ENCODE measurements at regions of chr17 and their contacts with region 1.

Region 1: DNA sequence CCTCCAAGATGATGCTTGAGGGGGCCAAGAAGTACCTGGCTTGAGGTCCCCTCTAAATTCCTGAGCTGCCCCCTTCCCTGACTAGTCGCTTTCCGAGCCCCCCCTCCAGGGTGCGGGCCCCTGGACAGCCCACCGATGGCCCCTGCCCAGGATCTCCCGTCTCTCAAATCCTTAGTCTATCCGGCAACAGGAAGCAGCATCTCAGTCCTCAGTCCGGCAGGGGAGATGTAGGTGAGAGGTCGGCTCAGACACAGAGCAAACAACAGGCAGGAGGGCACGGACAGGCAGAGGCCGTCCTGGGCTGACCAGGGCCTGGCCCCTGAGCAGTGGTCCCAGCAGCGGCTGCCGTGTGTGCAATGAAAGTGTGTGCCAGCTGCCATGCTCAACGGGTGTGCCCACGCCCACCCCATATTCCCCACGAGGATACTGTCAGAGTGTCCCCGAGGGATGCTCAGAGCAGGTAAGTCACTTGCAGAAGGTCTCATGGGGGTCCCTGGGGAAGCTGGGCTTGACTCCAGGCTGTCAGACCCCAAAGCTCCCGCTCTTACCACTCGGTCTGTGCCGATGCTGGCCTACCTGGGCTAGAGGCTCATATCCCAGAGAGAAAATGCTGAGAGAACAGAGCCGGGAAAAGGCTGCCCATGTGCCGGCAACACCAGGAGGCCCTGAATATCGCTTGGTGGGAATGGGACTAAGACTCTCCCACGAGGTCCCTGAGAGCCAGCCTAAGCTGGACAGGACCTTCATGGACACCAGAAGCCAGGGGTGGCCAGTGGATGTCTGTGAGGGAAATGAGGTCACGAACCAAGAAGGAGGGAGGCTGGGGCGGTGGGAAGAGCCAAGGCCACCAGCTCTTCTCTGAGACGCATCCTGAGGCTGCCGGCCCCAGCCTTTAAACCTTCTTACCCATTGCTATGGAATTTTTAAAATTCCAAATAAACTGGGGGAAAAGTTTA is 7.1 kb downstream of the SLC43A2 start:
- DNase-seq: no peak
- H3K4me3 ChIP-seq: no peak overlapping the region
- H3K27ac ChIP-seq: no peak overlapping the region
- H3K4me1 ChIP-seq: no peaks in the 10 kb centered on the region
- H3K27me3 ChIP-seq: no peaks in the 10 kb centered on the region
- CTCF ChIP-seq: no peak
- POLR2A ChIP-seq: no peak

Region 2: DNA sequence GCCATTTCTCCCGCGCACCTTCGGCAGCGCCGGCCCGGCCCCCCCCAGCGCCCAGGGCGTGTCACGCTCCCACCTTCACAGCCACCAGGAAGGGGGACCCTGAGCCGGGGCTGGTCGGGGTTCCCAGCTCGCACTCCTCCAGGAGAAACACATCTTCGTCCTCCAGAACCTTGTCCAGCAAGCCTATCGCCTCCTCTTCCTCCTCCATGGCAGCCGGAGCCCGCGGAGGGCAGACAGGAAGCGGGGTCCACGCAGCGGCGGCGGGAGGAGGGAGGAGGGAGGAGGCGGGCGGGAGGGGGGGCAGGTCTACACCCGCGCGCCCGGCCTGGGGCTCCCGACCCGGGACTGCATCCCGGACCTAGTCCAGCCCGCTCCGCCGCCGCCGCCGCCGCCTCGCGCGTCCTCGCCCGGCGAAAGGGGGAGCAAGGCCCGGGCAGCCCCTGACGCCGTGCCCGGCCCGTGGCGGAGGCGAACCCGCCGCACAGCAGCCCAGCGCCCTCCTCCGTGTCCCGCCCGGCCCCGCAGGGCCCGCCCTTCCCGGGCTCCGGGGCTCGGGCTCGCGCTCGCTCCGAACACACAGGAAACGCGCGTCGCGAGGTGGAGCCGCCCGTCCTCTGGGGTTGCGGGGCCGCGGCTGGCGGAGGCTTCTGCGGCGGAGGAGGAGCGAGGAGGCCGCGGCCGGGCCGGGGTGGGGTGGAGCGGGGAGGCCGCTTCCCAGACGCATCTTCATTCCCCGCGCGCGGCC is 512.5 kb before region 1 on chr17:
- intact Hi-C with region 1: no loop called
- DNase-seq: peak in 1 of 2 donors; percentile 87
- H3K4me3 ChIP-seq: peak overlapping the region; percentile 65 to 69
- H3K27ac ChIP-seq: peak overlapping the region; percentile 90
- H3K4me1 ChIP-seq: peaks cover 62% of the 10 kb centered on the region
- H3K27me3 ChIP-seq: no peaks in the 10 kb centered on the region
- CTCF ChIP-seq: no peak
- POLR2A ChIP-seq: peak in 1 of 2 donors; percentile 19

Region 3: GRCh38 chr17:2222901-2223616 is 601.5 kb after region 1 on chr17:
- intact Hi-C with region 1: loop called (anchors 5 kb)
- DNase-seq: no peak
- H3K4me3 ChIP-seq: no peak overlapping the region
- H3K27ac ChIP-seq: peak overlapping the region; percentile 9
- H3K4me1 ChIP-seq: peaks cover 16% of the 10 kb centered on the region
- H3K27me3 ChIP-seq: no peaks in the 10 kb centered on the region
- CTCF ChIP-seq: no peak
- POLR2A ChIP-seq: no peak